ENCODE measurements at regions of chr16 and their contacts with region 1.

Region 1: DNA sequence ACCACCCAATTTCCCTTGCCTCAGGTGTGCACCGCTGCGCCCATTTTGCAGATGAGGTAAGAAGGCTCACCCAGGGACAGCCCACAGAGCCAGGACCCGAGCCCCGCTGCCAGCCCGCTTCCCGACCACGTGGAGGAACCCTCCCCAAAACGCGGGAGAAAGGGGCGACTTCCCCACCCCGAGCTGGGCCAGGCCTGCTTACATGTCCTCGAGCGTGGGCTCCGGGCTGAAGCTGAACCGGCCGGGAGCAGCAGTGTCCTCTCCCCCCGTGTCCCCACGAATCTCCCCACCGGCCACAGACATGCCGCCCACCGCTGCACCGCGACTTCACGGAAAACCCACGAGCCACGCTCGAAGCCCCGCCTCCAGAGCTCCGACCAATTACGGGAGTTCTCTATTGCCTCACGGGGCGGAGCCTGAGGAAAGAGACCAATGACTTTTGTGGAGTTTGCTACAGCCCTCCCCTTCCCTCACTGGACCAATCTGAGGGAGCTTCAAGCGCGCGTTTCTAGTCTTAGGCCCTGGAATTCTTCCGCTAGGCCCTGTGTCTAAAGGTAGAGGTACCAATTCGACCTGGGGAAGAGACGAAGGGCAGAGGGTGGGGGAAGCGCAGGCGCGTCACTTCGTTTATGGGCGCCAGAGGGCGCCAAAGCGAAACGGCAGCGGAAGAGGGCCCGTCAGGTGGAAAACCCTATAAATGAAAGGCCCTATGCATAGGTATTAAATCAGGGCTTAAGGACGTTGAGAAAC is at the start of gene DCTPP1:
- DNase-seq: peak; percentile 91
- ATAC-seq: peak; percentile 98
- H3K4me3 Mint-ChIP-seq: no peak within 1 kb of the TSS
- H3K27ac Mint-ChIP-seq: peak within 1 kb of the TSS; percentile 79
- H3K4me1 Mint-ChIP-seq: peaks cover 17% of the 10 kb centered on the region
- H3K27me3 Mint-ChIP-seq: peaks cover 22% of the 10 kb centered on the region
- CTCF ChIP-seq: peak; percentile 74
- total RNA-seq, gene DCTPP1: 69.0 to 72.2 TPM (median 70.5 TPM) in 3 replicates

Region 2: GRCh38 chr16:30112197-30113030 is 317.4 kb before region 1 on chr16:
- CTCF ChIA-PET with region 1: interaction called, 15 read pairs
- POLR2A ChIA-PET with region 1: interaction called, 3 read pairs
- DNase-seq: peak; percentile 82
- ATAC-seq: peak; percentile 83
- H3K4me3 Mint-ChIP-seq: no peak overlapping the region
- H3K27ac Mint-ChIP-seq: no peak overlapping the region
- H3K4me1 Mint-ChIP-seq: peaks cover 3% of the 10 kb centered on the region
- H3K27me3 Mint-ChIP-seq: no peaks in the 10 kb centered on the region
- CTCF ChIP-seq: peak; percentile 90

Region 3: GRCh38 chr16:30445408-30446202 is 15.8 kb after region 1 on chr16 and contains the start of gene SEPHS2:
- CTCF ChIA-PET with region 1: interaction called, 25 read pairs
- POLR2A ChIA-PET with region 1: no interaction called
- DNase-seq: peak; percentile 96
- ATAC-seq: peak; percentile 91
- H3K4me3 Mint-ChIP-seq: peak within 1 kb of the TSS; percentile 77
- H3K27ac Mint-ChIP-seq: peak within 1 kb of the TSS; percentile 98
- H3K4me1 Mint-ChIP-seq: peaks cover 22% of the 10 kb centered on the region
- H3K27me3 Mint-ChIP-seq: peaks cover 28% of the 10 kb centered on the region
- CTCF ChIP-seq: no peak
- total RNA-seq, gene SEPHS2: 50.4 to 55.2 TPM (median 53.5 TPM) in 3 replicates

Region 4: GRCh38 chr16:30526823-30527635 is 97.2 kb after region 1 on chr16:
- CTCF ChIA-PET with region 1: interaction called, 20 read pairs
- POLR2A ChIA-PET with region 1: no interaction called
- DNase-seq: peak; percentile 99
- ATAC-seq: peak; percentile 91
- H3K4me3 Mint-ChIP-seq: peak overlapping the region; percentile 65
- H3K27ac Mint-ChIP-seq: peak overlapping the region; percentile 84
- H3K4me1 Mint-ChIP-seq: peaks cover 16% of the 10 kb centered on the region
- H3K27me3 Mint-ChIP-seq: no peaks in the 10 kb centered on the region
- CTCF ChIP-seq: no peak

Region 5: DNA sequence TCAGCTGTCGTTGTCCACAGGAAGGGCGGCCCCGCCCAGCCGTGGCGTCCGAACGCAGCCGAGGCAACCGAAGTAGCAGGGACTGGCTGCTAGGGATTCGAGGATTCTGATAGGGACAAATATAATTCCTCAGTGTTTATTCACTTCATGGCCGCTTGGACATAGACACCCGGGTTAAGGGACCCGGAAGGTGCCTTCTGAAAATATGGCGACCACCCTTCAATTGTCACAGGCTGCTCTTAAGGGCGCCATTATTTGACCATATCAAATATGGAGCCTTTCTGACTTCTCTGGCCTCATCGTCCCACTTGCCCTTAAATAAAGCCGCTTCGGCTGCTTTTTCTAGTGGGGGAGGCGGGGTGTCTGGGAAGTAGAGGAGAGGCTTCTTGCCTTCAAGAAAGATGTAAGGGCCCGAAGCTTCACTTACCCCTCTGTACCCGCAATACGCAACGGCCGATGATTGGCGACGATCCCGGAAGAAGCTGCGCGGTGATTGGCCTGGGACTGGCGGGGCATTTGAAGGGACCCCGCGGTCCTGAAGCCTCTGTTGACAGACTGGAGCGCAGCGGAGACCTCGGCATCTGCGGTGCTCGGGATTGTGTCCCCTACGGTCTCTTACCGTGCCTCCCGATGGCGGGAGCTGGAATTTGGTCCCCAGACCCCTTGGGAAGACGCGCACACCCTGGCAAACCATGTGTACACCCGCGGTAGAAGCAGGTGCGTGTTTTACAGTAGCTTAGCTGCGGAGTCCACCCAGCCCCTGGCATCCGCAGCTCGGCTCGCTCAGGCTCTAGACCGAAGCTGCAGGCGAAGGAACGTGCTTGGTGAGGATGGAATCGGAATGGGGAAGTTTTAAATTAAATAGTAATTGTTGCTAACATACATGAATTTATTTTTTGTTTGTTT is 142.1 kb after region 1 on chr16 and contains the start of gene ZNF688:
- CTCF ChIA-PET with region 1: interaction called, 21 read pairs
- POLR2A ChIA-PET with region 1: interaction called, 3 read pairs
- DNase-seq: peak; percentile 93
- ATAC-seq: peak; percentile 87
- H3K4me3 Mint-ChIP-seq: peak within 1 kb of the TSS; percentile 91
- H3K27ac Mint-ChIP-seq: peak within 1 kb of the TSS; percentile 67
- H3K4me1 Mint-ChIP-seq: peaks cover 15% of the 10 kb centered on the region
- H3K27me3 Mint-ChIP-seq: no peaks in the 10 kb centered on the region; the same call in 1 of the 2 replicates
- CTCF ChIP-seq: no peak
- total RNA-seq, gene ZNF688: 4.2 to 6.0 TPM (median 4.9 TPM) in 3 replicates

Region 6: DNA sequence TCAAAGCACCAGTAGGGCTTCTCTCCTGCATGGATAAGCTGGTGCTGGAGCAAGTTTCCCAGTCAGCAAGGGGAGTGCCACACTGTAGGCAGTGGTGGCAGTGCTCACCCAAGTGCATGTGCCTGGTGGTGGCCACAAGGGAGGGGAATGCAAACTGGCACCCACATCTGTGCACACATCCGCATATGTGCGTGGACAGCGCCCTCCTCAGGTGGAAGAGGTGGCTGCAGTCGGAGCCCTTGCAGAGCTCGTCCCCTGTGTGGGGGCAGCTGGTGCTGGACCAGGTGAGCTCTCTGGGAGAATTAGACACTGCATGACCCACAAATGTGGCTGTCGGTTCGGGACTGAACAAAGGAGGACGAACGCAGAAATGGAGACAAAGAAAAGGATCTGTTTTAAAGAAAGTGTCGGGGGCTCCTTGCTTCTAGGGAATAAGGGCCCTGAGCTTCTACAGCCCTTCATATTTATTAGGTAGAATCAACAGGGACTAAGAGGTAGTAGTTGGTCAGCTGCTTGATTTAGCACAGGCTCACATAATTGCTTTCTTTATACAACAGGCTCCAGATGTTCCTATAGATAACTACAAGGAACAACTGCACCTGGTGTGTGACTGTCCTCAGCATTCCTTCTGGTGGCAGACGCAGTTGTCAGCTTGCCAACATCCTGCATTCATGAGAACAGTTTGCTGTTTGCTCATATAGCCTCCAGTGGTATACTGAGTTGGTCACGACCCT is 185.7 kb after region 1 on chr16:
- CTCF ChIA-PET with region 1: interaction called, 79 read pairs
- POLR2A ChIA-PET with region 1: interaction called, 8 read pairs
- DNase-seq: peak; percentile 98
- ATAC-seq: peak; percentile 90
- H3K4me3 Mint-ChIP-seq: no peak overlapping the region
- H3K27ac Mint-ChIP-seq: no peak overlapping the region
- H3K4me1 Mint-ChIP-seq: peaks cover 1% of the 10 kb centered on the region; the same call in 1 of the 2 replicates
- H3K27me3 Mint-ChIP-seq: peaks cover 17% of the 10 kb centered on the region
- CTCF ChIP-seq: peak; percentile 99

Region 7: GRCh38 chr16:30657866-30658730 is 228.2 kb after region 1 on chr16 and contains the start of gene FBRS:
- CTCF ChIA-PET with region 1: interaction called, 12 read pairs
- POLR2A ChIA-PET with region 1: no interaction called
- DNase-seq: peak; percentile 100
- ATAC-seq: peak; percentile 93
- H3K4me3 Mint-ChIP-seq: peak within 1 kb of the TSS; percentile 96
- H3K27ac Mint-ChIP-seq: peak within 1 kb of the TSS; percentile 100
- H3K4me1 Mint-ChIP-seq: peaks cover 9% of the 10 kb centered on the region
- H3K27me3 Mint-ChIP-seq: peaks cover 37% of the 10 kb centered on the region
- CTCF ChIP-seq: peak; percentile 62; the same call in 1 of the 2 replicates
- total RNA-seq, gene FBRS: 18.9 to 23.2 TPM (median 19.9 TPM) in 3 replicates